ENCODE measurements at regions of chr18 and their contacts with region 1.

Region 1: GRCh38 chr18:49510393-49511115 is 23.5 kb upstream of the C18orf32 start:
- DNase-seq: peak in 1 of 2 donors; percentile 56
- ATAC-seq: peak; percentile 47

Region 2: GRCh38 chr18:49858309-49859020 is 347.9 kb after region 1 on chr18:
- intact Hi-C with region 1: loop called (anchors 5 to 10 kb)
- DNase-seq: peak; percentile 58 to 75
- ATAC-seq: peak; percentile 78

Region 3: GRCh38 chr18:50203801-50204604 is 693.4 kb after region 1 on chr18:
- intact Hi-C with region 1: loop called in 1 of 2 experiments (anchors 10 kb)
- DNase-seq: peak; percentile 42 to 65
- ATAC-seq: peak; percentile 86